CD8-positive, alpha-beta T cell (primary cell): ENCODE measurements at regions of chr9 and their contacts with region 1.

Region 1: DNA sequence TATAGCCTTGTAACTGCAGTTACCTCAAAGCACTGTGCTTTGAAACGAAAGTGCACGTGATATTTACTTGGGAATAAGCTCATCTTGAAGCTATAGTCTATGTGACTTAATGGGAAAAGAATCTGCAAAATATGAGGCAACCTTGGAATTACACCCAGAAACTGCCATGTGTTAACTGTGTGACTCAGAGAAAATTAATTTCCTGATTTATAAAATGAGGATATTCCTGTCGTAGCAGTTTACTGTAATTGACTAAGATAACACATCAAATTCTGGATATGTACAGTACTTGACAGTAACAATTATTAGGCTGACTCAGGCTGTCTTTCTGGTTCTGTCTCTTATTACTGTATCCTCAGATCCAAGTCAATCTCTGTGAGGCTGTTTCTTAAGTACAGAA is 1079.9 kb upstream of the ACO1 start:
- DNase-seq: no peak
- ATAC-seq: no peak
- H3K4me3 ChIP-seq: no peak overlapping the region
- H3K4me3 Mint-ChIP-seq: no peak overlapping the region
- H3K27ac ChIP-seq: no peak overlapping the region
- H3K27ac Mint-ChIP-seq: no peak overlapping the region
- H3K4me1 ChIP-seq: peaks cover 5% of the 10 kb centered on the region
- H3K4me1 Mint-ChIP-seq: peaks cover 28% of the 10 kb centered on the region
- H3K27me3 ChIP-seq: no peaks in the 10 kb centered on the region
- H3K27me3 Mint-ChIP-seq: no peaks in the 10 kb centered on the region
- CTCF ChIP-seq: no peak

Region 2: DNA sequence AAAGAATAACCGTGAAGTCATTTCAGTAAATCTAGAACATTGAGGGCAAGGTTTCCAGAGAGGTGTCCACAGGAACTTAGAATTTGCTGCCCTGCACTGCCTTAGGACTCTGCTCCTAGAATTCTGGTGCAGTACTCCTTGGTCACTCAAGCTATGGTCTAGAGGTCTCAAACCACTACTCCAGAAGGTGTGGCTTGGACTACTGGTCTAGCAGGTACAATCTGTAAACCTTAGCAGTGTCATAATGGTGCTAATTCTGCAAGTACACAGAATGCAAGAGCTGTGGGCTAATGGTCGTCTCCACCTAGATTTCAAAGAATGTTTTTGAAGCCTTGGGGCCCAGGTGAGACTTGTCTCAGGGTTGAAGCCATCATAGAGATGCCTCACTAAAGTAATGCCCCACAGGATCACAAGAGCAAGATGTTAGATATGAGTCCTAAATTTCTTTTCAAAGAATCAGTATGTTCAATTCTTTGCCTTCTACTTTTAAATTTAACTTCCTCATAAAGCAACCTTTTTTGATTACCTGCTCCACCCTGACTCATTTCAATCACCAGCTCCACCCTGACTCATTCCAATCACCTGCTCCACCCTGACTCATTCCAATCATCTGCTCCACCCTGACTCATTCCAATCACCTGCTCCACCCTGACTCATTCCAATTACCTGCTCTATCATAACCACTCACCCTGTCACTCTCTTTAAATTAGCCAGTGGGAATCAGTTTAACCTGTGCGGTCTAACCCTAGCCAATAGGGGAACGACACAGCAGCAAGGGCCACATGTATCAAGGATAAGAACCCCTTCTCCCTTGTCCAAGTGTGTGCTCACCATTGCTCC is 31.9 kb before region 1 on chr9:
- CTCF ChIA-PET with region 1: no interaction called
- POLR2A ChIA-PET with region 1: no interaction called
- intact Hi-C with region 1: no loop called
- DNase-seq: no peak
- ATAC-seq: no peak
- H3K4me3 ChIP-seq: no peak overlapping the region
- H3K4me3 Mint-ChIP-seq: no peak overlapping the region
- H3K27ac ChIP-seq: no peak overlapping the region
- H3K27ac Mint-ChIP-seq: no peak overlapping the region
- H3K4me1 ChIP-seq: no peaks in the 10 kb centered on the region
- H3K4me1 Mint-ChIP-seq: peaks cover 5% of the 10 kb centered on the region
- H3K27me3 ChIP-seq: no peaks in the 10 kb centered on the region
- H3K27me3 Mint-ChIP-seq: no peaks in the 10 kb centered on the region
- CTCF ChIP-seq: no peak

Region 3: GRCh38 chr9:31335529-31336234 is 31.1 kb after region 1 on chr9:
- CTCF ChIA-PET with region 1: no interaction called
- POLR2A ChIA-PET with region 1: no interaction called
- intact Hi-C with region 1: loop called in 1 of 2 experiments (anchors 5 kb)
- DNase-seq: peak in 1 of 9 experiments; percentile 36
- ATAC-seq: peak; percentile 17
- H3K4me3 ChIP-seq: no peak overlapping the region
- H3K4me3 Mint-ChIP-seq: peak overlapping the region; percentile 2
- H3K27ac ChIP-seq: peak overlapping the region; percentile 10 to 44
- H3K27ac Mint-ChIP-seq: peak overlapping the region; percentile 81
- H3K4me1 ChIP-seq: peaks cover 23% of the 10 kb centered on the region
- H3K4me1 Mint-ChIP-seq: peaks cover 24% of the 10 kb centered on the region
- H3K27me3 ChIP-seq: no peaks in the 10 kb centered on the region
- H3K27me3 Mint-ChIP-seq: no peaks in the 10 kb centered on the region
- CTCF ChIP-seq: no peak